Naive thymus-derived CD4-positive, alpha-beta T cell (primary cell): ENCODE measurements at regions of chr18 and their contacts with region 1.

Region 1: GRCh38 chr18:77124452-77124922 is 8.1 kb downstream of the MBP start:
- DNase-seq: peak in 2 of 9 donors; percentile 33 to 56
- ATAC-seq: peak; percentile 46
- H3K4me3 ChIP-seq: peak overlapping the region; percentile 31
- H3K4me3 Mint-ChIP-seq: peak overlapping the region; percentile 65 to 97 (median 77)
- H3K27ac ChIP-seq: peak overlapping the region; percentile 62
- H3K27ac Mint-ChIP-seq: peak overlapping the region; percentile 21 to 92 (median 81)
- H3K4me1 ChIP-seq: peaks cover 77 to 81% of the 10 kb centered on the region in 2 donors
- H3K4me1 Mint-ChIP-seq: peaks cover 70 to 100% (median 98%) of the 10 kb centered on the region in 7 donors
- H3K27me3 ChIP-seq: no peaks in the 10 kb centered on the region
- H3K27me3 Mint-ChIP-seq: no peaks in the 10 kb centered on the region

Region 2: GRCh38 chr18:76922107-76922506 is 202.4 kb before region 1 on chr18:
- CTCF ChIA-PET with region 1: no interaction called
- POLR2A ChIA-PET with region 1: no interaction called
- intact Hi-C with region 1: no loop called
- DNase-seq: peak in 8 of 9 donors; percentile 40 to 72 (median 62)
- ATAC-seq: peak; percentile 98
- H3K4me3 ChIP-seq: no peak overlapping the region
- H3K4me3 Mint-ChIP-seq: peak overlapping the region in 1 of 10 donors; percentile 50
- H3K27ac ChIP-seq: no peak overlapping the region
- H3K27ac Mint-ChIP-seq: peak overlapping the region in 7 of 9 donors; percentile 1 to 78 (median 49)
- H3K4me1 ChIP-seq: no peaks in the 10 kb centered on the region
- H3K4me1 Mint-ChIP-seq: peaks cover 14 to 21% (median 18%) of the 10 kb centered on the region in 7 donors
- H3K27me3 ChIP-seq: no peaks in the 10 kb centered on the region
- H3K27me3 Mint-ChIP-seq: no peaks in the 10 kb centered on the region

Region 3: DNA sequence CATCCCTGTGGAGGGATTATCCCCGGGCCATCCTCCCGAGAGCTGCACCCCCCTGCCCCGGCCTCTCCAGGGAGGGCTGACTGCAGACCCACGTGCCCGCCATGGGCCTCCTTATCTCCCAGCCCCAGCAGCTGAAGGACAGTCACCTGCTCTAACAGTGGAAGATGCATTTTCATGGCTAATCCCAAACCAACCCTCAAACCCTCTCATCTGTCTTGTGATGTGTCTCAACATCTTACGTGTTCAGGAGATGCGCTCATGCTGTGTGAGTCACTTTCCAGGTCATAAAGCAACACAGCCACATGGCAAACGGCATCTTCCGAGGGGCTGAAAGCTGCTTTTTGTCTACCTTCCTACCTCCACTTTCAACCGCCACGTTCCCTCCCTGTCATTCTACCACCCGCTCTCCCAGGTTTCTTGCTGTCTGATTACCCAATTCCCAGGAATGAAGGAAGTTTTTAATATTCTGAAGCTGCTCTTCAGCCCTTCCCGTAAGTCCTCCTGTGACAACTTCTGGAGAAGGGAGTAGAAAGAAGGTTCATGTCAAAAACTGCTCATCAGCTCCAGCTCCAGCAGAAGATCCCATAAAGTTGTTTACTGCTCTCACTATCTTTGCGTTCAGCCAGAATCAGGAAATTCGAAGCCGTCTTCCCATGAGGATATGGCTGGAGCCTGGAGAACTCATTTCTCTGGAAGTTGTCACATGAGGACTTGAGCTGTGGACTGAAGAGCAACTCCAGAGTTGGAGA is 46.4 kb before region 1 on chr18:
- CTCF ChIA-PET with region 1: no interaction called
- POLR2A ChIA-PET with region 1: no interaction called
- intact Hi-C with region 1: no loop called
- DNase-seq: no peak
- ATAC-seq: no peak
- H3K4me3 ChIP-seq: no peak overlapping the region
- H3K4me3 Mint-ChIP-seq: no peak overlapping the region
- H3K27ac ChIP-seq: no peak overlapping the region
- H3K27ac Mint-ChIP-seq: peak overlapping the region; percentile 24 to 88 (median 72)
- H3K4me1 ChIP-seq: peaks cover 24 to 51% of the 10 kb centered on the region in 2 donors
- H3K4me1 Mint-ChIP-seq: peaks cover 33 to 94% (median 82%) of the 10 kb centered on the region in 7 donors
- H3K27me3 ChIP-seq: no peaks in the 10 kb centered on the region
- H3K27me3 Mint-ChIP-seq: no peaks in the 10 kb centered on the region

Region 4: DNA sequence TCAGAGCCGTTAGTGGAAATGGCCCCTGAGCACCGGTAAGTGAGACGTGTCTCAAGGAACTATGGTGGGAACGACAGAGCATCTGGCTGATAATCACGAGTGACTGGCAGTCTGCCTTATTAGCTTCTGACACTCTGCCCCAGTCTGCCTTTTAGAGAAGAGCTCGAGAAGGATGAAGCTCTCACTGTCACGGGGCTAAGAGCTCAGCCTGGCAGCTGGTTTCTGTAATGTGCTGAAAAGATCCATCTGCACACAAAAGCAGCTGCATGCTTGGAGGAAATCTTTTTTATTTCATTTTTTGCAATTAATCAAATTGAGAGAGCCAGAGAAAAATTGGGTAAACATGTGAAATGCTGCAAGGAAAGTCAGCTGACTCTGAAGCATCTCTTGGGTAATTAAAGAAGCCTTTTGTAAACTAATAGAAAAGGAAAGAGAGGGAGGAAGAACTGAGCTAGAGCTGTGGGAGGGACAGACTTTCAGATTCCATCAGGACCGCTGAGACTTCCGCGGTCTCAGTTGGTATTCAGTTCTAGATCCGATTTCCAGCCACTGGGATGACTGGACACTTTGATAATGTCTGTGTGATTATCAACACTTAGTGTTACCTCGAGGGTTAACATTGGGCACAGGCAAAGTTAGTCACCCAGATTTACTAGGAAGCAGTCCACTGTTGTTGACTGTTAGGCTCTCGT is 16.3 kb before region 1 on chr18:
- CTCF ChIA-PET with region 1: interaction called, 16 read pairs
- POLR2A ChIA-PET with region 1: interaction called, 68 read pairs
- intact Hi-C with region 1: loop called in 1 of 2 experiments (anchors 1 kb)
- DNase-seq: peak in 1 of 9 donors; percentile 29
- ATAC-seq: peak; percentile 43
- H3K4me3 ChIP-seq: peak overlapping the region; percentile 15
- H3K4me3 Mint-ChIP-seq: peak overlapping the region; percentile 17 to 92 (median 64)
- H3K27ac ChIP-seq: peak overlapping the region; percentile 70
- H3K27ac Mint-ChIP-seq: peak overlapping the region; percentile 78 to 99 (median 97)
- H3K4me1 ChIP-seq: peaks cover 61 to 69% of the 10 kb centered on the region in 2 donors
- H3K4me1 Mint-ChIP-seq: peaks cover 78 to 98% (median 96%) of the 10 kb centered on the region in 7 donors
- H3K27me3 ChIP-seq: no peaks in the 10 kb centered on the region
- H3K27me3 Mint-ChIP-seq: no peaks in the 10 kb centered on the region

Region 5: DNA sequence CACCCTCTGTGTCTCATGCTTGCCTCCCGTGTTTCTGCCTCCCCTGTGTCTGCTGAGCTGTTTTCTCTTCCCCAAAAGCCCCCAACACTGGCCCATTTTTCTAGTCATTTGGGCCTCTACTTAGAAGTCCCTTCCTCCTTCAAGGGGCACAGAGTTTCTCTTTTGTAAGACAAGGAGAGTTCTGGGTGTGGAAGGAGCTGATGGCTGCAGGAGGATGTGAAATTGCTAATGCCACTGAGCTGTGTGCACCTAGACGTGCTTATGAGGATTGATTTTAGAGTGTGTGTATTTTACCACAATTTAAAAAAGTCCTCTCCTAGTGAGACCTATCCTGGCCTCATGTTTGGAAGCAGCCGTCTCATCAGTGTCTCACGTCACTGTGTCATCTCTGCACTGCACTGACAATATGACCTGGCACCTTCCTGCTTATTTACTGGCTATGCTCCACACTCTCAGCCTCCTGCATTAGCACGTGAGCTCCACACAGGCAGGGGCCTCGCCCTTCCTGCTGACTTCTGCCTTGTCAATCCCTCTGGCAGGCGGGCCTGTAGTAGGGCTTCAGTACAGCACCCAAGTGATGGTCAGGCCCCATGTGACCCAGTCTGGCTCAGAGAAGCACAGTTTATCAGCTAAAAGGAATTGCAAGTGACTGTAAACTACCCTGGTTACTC is 16.1 kb after region 1 on chr18:
- CTCF ChIA-PET with region 1: no interaction called
- POLR2A ChIA-PET with region 1: interaction called, 83 read pairs
- intact Hi-C with region 1: loop called in 1 of 2 experiments (anchors 2 kb)
- DNase-seq: peak in 7 of 9 donors; percentile 61 to 77 (median 69)
- ATAC-seq: peak; percentile 92
- H3K4me3 ChIP-seq: no peak overlapping the region
- H3K4me3 Mint-ChIP-seq: peak overlapping the region; percentile 4 to 62 (median 43)
- H3K27ac ChIP-seq: peak overlapping the region; percentile 14
- H3K27ac Mint-ChIP-seq: peak overlapping the region; percentile 65 to 97 (median 86)
- H3K4me1 ChIP-seq: peaks cover 19 to 20% of the 10 kb centered on the region in 2 donors
- H3K4me1 Mint-ChIP-seq: peaks cover 21 to 48% (median 33%) of the 10 kb centered on the region in 7 donors
- H3K27me3 ChIP-seq: no peaks in the 10 kb centered on the region
- H3K27me3 Mint-ChIP-seq: no peaks in the 10 kb centered on the region